ENCODE measurements at regions of chr10 and their contacts with region 1.

Region 1: DNA sequence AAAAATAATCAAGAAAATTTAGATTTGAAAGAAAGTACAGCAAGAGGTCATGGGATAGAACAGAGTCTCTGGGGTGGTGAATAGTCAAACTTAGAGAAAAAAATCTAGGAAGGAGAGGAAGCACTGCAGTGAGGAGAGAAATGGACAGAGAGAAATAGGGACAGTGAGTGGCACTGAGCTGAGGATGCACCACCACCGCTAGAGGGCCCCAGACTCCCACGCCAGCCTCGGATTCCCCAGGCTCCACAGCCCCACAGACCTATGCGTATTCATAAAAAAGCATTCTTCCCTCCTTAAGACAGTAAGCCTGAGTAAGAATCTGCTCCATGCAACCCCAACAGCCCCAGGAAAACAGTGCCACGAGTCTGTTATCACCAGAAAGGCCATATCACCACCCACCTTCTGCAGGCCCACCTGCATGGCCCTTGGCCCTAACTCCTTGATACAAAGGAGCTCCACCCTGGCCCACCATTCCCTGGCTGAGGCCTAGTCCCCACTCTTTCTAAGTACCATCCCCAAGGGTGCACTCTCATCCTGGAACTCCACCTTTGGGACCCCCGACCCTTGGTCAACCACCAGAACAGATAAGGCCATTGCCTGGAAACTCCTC is 91.0 kb downstream of the ALOX5 start:
- DNase-seq: no peak
- H3K4me3 ChIP-seq: no peak overlapping the region
- H3K27me3 ChIP-seq: no peaks in the 10 kb centered on the region
- CTCF ChIP-seq: peak; percentile 96

Region 2: DNA sequence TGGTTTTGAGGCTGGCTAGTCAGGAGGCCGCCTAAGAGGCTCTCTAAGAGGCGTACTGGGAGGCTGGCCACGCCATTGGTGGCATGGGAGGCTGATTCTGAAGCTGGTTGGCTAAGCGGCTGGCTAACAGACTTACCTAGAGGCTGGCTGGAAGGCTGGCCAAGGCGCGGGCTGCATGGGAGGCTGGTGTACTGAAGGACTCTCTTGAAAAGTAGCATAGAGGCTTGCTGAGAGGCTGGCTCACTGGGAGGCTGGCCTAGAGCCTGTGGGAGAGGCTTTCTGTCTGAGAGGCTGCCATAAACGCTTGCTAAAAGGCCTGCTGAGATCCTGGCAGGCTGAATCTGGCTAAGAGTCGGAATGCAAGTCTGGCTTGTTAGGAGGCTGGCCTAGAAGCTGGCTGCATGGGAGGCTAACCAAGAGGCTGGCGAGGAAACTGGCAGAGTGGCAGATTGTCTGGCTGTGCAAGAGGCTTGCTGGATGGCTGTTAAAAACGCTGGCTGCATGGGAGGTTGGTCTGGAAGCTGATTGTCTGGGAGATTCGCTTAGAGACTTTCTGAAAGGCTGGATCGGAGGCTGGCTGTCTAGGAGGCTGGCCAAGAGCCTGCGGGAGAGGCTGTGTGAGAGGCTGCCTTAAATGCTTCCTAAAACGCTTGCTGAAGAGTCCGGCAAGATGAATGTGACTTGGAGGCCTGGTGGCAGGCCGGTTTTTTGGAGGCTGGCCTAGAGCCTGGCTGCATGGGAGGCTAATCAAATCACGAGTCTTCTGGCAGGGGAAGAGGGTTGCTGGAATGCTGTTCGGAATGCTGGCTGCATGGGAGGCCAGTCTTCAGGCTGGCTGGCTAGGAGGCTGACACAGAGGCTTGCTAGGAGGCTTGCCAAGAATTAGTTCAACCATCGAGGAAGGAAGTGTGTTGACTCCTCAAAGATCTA is 283.9 kb before region 1 on chr10:
- CTCF ChIA-PET with region 1: no interaction called
- POLR2A ChIA-PET with region 1: no interaction called
- DNase-seq: no peak
- H3K4me3 ChIP-seq: no peak overlapping the region
- H3K27me3 ChIP-seq: no peaks in the 10 kb centered on the region
- CTCF ChIP-seq: no peak

Region 3: DNA sequence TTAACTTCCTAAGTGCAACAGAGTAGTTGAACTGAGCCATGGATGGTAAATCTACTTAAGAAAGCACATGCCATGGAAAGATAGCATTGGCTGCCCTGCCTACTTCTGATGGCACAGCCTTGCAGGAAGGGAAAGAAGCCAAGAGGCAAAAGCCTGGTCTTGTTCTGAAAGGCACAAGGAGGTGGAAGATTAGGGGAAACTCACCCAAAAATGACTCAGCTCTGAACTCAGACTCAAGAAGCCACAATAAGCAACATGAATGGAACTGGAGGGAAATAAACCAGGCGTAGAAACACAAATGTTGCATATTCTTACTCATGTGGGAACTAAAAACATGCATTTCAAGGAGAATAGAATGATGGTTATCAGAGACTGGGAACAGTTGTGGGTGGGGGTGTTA is 111.9 kb before region 1 on chr10:
- CTCF ChIA-PET with region 1: no interaction called
- POLR2A ChIA-PET with region 1: no interaction called
- DNase-seq: no peak
- H3K4me3 ChIP-seq: no peak overlapping the region
- H3K27me3 ChIP-seq: no peaks in the 10 kb centered on the region
- CTCF ChIP-seq: no peak

Region 4: DNA sequence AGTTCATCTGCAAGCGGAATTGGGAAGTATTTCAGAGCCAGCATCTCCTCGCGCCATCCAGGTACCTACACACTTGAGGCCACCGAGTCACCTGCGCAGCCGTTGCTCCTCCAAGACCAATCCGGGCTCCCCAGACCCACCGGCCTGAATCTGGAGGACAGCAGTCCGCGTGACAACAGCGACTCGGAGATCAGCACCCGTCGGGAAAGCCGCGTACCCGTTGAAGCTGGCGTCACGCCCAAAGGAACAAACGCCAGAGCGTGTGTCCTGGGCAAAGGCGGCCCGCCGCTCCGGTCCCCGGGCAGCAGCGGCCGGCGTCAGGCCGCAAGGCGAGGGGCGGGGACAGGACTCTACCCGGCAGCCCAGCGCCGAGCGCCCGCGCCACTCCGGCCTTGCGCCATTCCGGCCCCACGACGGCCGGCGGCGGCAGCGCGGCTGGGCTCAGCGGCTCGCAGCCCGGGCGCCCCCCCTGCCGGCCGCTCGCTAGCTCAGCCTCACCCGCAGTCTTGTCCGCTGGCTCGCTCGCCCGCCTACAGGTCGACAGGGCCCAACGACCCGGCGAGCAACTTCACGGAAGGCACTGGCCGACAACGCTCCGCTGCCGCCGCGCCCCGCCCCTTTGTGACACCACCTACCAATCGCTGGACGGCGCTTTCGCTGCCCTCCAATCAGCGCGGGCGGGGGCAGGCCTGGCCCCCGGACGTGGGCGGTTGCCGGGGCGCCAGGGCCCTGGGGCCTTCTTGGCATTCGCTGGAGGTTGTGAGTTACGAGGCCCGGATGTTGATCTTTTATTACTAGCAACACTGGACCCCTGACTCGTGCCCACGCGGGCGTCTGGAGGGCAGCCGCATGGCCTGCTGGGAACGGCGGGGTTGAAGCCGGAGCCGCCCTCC is 207.4 kb after region 1 on chr10 and contains the start of gene ZFAND4:
- CTCF ChIA-PET with region 1: interaction called, 23 read pairs
- POLR2A ChIA-PET with region 1: no interaction called
- DNase-seq: peak; percentile 82
- H3K4me3 ChIP-seq: peak within 1 kb of the TSS; percentile 61
- H3K27me3 ChIP-seq: no peaks in the 10 kb centered on the region
- CTCF ChIP-seq: peak; percentile 46
- polyA plus RNA-seq, gene ZFAND4: 2.1 and 3.6 TPM in 2 replicates

Measured in BJ (cell line).